Posterior vena cava (tissue), 2 donors: ENCODE measurements at regions of chr13 and their contacts with region 1.

Region 1: GRCh38 chr13:74133657-74134201 is 475 bp downstream of the KLF12 start:
- DNase-seq: peak; percentile 94

Region 2: GRCh38 chr13:73835138-73835721 is 298.5 kb before region 1 on chr13:
- intact Hi-C with region 1: loop called in 1 of 2 experiments (anchors 10 kb)
- DNase-seq: no peak

Region 3: DNA sequence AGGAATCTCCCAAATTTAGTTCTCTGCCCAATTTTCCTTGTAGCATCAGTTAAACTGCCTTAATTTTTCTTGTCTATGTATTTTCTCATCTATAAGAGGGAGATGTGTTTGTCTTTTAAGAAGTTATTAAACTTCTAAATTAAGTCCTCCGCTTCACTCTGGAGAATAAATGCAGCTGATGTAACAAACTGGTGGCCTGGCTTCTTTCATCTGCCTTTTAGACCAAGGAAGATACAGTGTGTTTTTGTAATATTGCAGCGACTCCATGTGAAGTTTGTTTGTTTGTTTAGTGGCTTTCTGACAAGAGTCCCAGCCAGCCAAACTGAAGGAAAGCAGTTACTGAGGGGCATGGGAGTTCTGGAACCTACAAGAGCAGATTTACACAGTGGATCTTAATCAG is 55.9 kb before region 1 on chr13:
- intact Hi-C with region 1: no loop called
- DNase-seq: no peak